K562 (cell line): ENCODE measurements at regions of chr11 and their contacts with region 1.

Region 1: GRCh38 chr11:57249384-57250319 is 12.6 kb upstream of the APLNR start:
- DNase-seq: peak; percentile 58 to 78 (median 64)
- ATAC-seq: peak; percentile 77
- H3K4me3 ChIP-seq: no peak overlapping the region
- H3K27ac ChIP-seq: no peak overlapping the region
- H3K4me1 ChIP-seq: peaks cover 6 to 17% of the 10 kb centered on the region in 2 experiments; a peak in 3 of 5 replicates
- H3K27me3 ChIP-seq: no peaks in the 10 kb centered on the region; a peak in 1 of 5 replicates
- CTCF ChIP-seq: peak; percentile 82 to 93 (median 83)
- EP300 ChIP-seq: no peak
- POLR2A ChIP-seq: no peak
- RAD21 ChIP-seq: peak; percentile 85 to 87

Region 2: GRCh38 chr11:56841210-56841810 is 408.3 kb before region 1 on chr11:
- CTCF ChIA-PET with region 1: interaction called, 27 read pairs
- POLR2A ChIA-PET with region 1: interaction called, 3 read pairs
- in situ Hi-C with region 1: no loop called
- intact Hi-C with region 1: loop called (anchors 1 kb)
- DNase-seq: peak; percentile 38 to 61 (median 52)
- ATAC-seq: peak; percentile 68
- H3K4me3 ChIP-seq: no peak overlapping the region
- H3K27ac ChIP-seq: no peak overlapping the region
- H3K4me1 ChIP-seq: no peaks in the 10 kb centered on the region
- H3K27me3 ChIP-seq: no peaks in the 10 kb centered on the region
- CTCF ChIP-seq: peak; percentile 56 to 71 (median 62)
- EP300 ChIP-seq: no peak
- POLR2A ChIP-seq: no peak
- RAD21 ChIP-seq: peak; percentile 74

Region 3: GRCh38 chr11:57116654-57117053 is 133.0 kb before region 1 on chr11:
- CTCF ChIA-PET with region 1: interaction called, 74 read pairs
- POLR2A ChIA-PET with region 1: interaction called, 12 read pairs
- in situ Hi-C with region 1: no loop called
- intact Hi-C with region 1: loop called (anchors 1 kb)
- DNase-seq: peak; percentile 42 to 78 (median 58)
- ATAC-seq: peak; percentile 95
- H3K4me3 ChIP-seq: no peak overlapping the region
- H3K27ac ChIP-seq: no peak overlapping the region
- H3K4me1 ChIP-seq: peaks cover 0 to 3% of the 10 kb centered on the region in 2 experiments; a peak in 2 of 5 replicates
- H3K27me3 ChIP-seq: no peaks in the 10 kb centered on the region
- CTCF ChIP-seq: peak; percentile 80 to 85 (median 80)
- EP300 ChIP-seq: no peak
- POLR2A ChIP-seq: no peak
- RAD21 ChIP-seq: peak; percentile 87 to 93

Region 4: GRCh38 chr11:57160665-57161064 is 89.0 kb before region 1 on chr11:
- CTCF ChIA-PET with region 1: no interaction called
- POLR2A ChIA-PET with region 1: no interaction called
- in situ Hi-C with region 1: no loop called
- intact Hi-C with region 1: no loop called
- DNase-seq: no peak
- ATAC-seq: no peak
- H3K4me3 ChIP-seq: no peak overlapping the region
- H3K27ac ChIP-seq: no peak overlapping the region
- H3K4me1 ChIP-seq: peaks cover 2% of the 10 kb centered on the region in 2 experiments; a peak in 3 of 5 replicates
- H3K27me3 ChIP-seq: no peaks in the 10 kb centered on the region
- CTCF ChIP-seq: no peak
- EP300 ChIP-seq: no peak
- POLR2A ChIP-seq: no peak
- RAD21 ChIP-seq: no peak

Region 5: GRCh38 chr11:57191314-57192219 is 58.1 kb before region 1 on chr11:
- CTCF ChIA-PET with region 1: no interaction called
- POLR2A ChIA-PET with region 1: no interaction called
- in situ Hi-C with region 1: no loop called
- intact Hi-C with region 1: loop called (anchors 5 kb)
- DNase-seq: no peak
- ATAC-seq: no peak
- H3K4me3 ChIP-seq: no peak overlapping the region
- H3K27ac ChIP-seq: no peak overlapping the region
- H3K4me1 ChIP-seq: no peaks in the 10 kb centered on the region
- H3K27me3 ChIP-seq: peaks cover 3 to 5% of the 10 kb centered on the region in 2 experiments; a peak in 2 of 5 replicates
- CTCF ChIP-seq: no peak
- EP300 ChIP-seq: no peak
- POLR2A ChIP-seq: no peak
- RAD21 ChIP-seq: no peak

Region 6: GRCh38 chr11:57277845-57278709 is 28.4 kb after region 1 on chr11:
- CTCF ChIA-PET with region 1: interaction called, 3 read pairs
- POLR2A ChIA-PET with region 1: interaction called, 3 read pairs
- in situ Hi-C with region 1: no loop called
- intact Hi-C with region 1: loop called (anchors 1 kb)
- DNase-seq: peak; percentile 70 to 76 (median 74)
- ATAC-seq: peak; percentile 92
- H3K4me3 ChIP-seq: no peak overlapping the region
- H3K27ac ChIP-seq: no peak overlapping the region
- H3K4me1 ChIP-seq: peaks cover 0 to 14% of the 10 kb centered on the region in 2 experiments; a peak in 4 of 5 replicates
- H3K27me3 ChIP-seq: no peaks in the 10 kb centered on the region
- CTCF ChIP-seq: peak; percentile 75 to 94 (median 80)
- EP300 ChIP-seq: 0 out of 2 replicates have a peak, but pooled peaks have one; percentile 3
- POLR2A ChIP-seq: no peak
- RAD21 ChIP-seq: peak; percentile 55 to 63